HepG2 (cell line): ENCODE measurements at regions of chr20 and their contacts with region 1.

Region 1: GRCh38 chr20:45890985-45891983 is at the starts of genes CTSA and NEURL2:
- DNase-seq: peak; percentile 98
- ATAC-seq: peak; percentile 80
- H3K4me3 ChIP-seq: peak within 1 kb of the TSS; percentile 86 to 98 (median 96)
- H3K27ac ChIP-seq: peak within 1 kb of the TSS; percentile 87
- H3K4me1 ChIP-seq: peaks cover 43% of the 10 kb centered on the region
- H3K27me3 ChIP-seq: no peaks in the 10 kb centered on the region
- CTCF ChIP-seq: peak; percentile 79
- EP300 ChIP-seq: peak; percentile 87 to 97
- POLR2A ChIP-seq: peak; percentile 90 to 94
- RAD21 ChIP-seq: peak; percentile 66
- total RNA-seq, gene CTSA: 63.8 and 202 TPM in 2 replicates
- total RNA-seq, gene NEURL2: 4.1 and 9.7 TPM in 2 replicates

Region 2: DNA sequence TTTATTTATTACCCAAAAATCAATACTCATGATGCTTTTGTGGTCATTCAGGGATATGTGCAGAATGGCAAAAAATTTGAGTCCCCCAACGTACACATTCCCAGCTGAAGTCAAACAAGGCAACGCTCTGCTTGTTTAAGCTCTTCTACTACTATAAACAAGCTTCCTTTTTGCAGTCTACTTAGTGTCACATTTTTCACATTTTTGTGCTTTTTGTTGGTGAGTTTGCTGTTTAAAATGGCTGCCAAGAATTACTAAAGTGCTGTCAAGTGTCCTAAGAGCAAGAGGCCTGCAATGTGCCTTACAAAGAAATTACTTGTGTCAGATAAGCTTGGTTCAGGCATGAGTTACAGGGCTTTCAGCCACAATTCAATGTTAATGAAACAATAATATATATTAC is 314.3 kb before region 1 on chr20:
- CTCF ChIA-PET with region 1: no interaction called
- POLR2A ChIA-PET with region 1: no interaction called
- in situ Hi-C with region 1: no loop called
- intact Hi-C with region 1: no loop called
- DNase-seq: peak; percentile 37
- ATAC-seq: no peak; the same call in 2 of the 3 replicates
- H3K4me3 ChIP-seq: no peak overlapping the region
- H3K27ac ChIP-seq: no peak overlapping the region
- H3K4me1 ChIP-seq: peaks cover 5% of the 10 kb centered on the region; the same call in 1 of the 2 replicates
- H3K27me3 ChIP-seq: peaks cover 0 to 5% of the 10 kb centered on the region in 2 experiments; a peak in 1 of 5 replicates
- CTCF ChIP-seq: no peak
- EP300 ChIP-seq: no peak
- POLR2A ChIP-seq: no peak
- RAD21 ChIP-seq: no peak

Region 3: DNA sequence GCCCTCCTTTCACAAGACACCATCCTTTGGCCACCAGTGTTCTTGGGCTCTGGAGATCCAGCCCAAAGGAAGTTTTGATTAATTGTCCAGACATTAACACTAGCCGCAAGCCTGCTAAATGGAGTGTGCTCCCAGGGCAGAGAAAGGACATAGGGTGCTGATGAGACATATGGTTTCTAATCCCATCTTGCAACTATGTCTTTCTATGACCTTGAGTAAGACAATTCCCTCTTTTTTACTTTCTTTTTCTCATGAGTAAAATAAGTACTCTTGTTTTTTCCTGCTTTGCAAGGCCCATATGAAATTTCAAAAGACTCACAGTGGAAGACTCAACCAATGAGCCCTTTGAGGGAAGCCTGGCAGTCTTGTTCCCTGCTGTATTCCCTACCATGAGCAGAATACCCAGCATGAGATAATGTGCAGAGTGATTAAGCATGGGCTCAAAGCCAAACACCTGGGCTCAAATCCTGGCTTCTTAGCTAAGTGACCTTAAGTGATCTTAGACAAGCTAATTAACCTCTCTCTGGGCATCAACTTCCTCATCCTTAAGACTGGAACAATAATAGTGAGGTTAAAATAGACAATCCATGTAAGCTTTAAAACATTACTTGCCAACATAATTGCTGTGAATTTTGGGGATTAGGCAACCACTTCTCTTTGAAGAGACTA is 186.2 kb before region 1 on chr20 and contains the start of gene WFDC10B:
- CTCF ChIA-PET with region 1: no interaction called
- POLR2A ChIA-PET with region 1: no interaction called
- in situ Hi-C with region 1: no loop called
- intact Hi-C with region 1: no loop called
- DNase-seq: no peak
- ATAC-seq: no peak
- H3K4me3 ChIP-seq: no peak within 1 kb of the TSS
- H3K27ac ChIP-seq: no peak within 1 kb of the TSS
- H3K4me1 ChIP-seq: no peaks in the 10 kb centered on the region
- H3K27me3 ChIP-seq: peaks cover 0 to 12% of the 10 kb centered on the region in 2 experiments; a peak in 2 of 5 replicates
- CTCF ChIP-seq: no peak
- EP300 ChIP-seq: no peak
- POLR2A ChIP-seq: no peak
- RAD21 ChIP-seq: no peak
- total RNA-seq, gene WFDC10B: not detected in 2 replicates

Region 4: DNA sequence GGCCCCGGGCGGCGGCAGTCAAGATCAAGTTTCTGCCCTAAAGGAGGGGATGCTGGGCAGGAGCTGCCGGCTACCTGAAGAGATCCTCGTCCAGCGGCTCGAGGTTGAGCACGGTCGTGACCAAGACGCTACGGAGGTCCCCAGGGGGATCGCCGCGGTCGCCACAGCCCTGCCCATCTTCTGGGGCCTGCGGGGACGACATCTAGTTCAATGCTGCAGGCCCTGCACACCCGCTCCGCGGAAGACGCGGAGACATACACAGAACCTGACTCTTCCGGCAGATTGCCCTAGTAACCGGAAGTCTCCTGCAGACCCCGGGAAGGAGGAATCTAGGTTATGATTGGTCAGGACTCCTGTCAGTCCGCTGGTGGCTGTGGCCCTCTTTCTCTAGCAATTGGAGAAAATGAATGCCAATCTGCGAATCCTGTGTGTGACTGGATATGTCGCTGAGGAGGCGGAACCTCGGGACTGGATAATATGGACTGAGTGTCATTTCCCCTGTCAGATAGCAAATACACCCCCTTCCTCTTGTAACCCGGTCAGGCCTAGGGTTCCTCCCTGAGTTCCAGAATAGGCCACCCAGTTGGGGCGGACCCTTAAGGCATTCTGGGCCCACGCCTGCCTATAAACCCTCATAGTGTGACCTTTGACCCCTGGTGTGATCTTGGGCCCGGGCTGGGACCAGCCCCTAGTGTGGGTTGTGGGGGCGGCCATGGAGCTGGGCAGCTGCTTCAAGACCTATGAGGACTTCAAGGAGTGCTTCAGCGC is 34.0 kb before region 1 on chr20 and contains the starts of genes ACOT8 and ZSWIM3:
- CTCF ChIA-PET with region 1: no interaction called
- POLR2A ChIA-PET with region 1: interaction called, 40 read pairs
- in situ Hi-C with region 1: no loop called
- intact Hi-C with region 1: loop called (anchors 2 kb)
- DNase-seq: peak; percentile 100
- ATAC-seq: peak; percentile 98
- H3K4me3 ChIP-seq: peak within 1 kb of the TSS; percentile 78 to 91 (median 83)
- H3K27ac ChIP-seq: peak within 1 kb of the TSS; percentile 49
- H3K4me1 ChIP-seq: peaks cover 55% of the 10 kb centered on the region
- H3K27me3 ChIP-seq: no peaks in the 10 kb centered on the region; a peak in 1 of 5 replicates
- CTCF ChIP-seq: 0 out of 2 replicates have a peak, but pooled peaks have one; percentile 19
- EP300 ChIP-seq: peak in 1 of 2 experiments; percentile 41; a peak in 1 of 4 replicates
- POLR2A ChIP-seq: peak; percentile 84 to 97
- RAD21 ChIP-seq: peak; percentile 62
- total RNA-seq, gene ACOT8: 31.4 and 39.1 TPM in 2 replicates
- total RNA-seq, gene ZSWIM3: 5.8 and 7.3 TPM in 2 replicates

Region 5: GRCh38 chr20:45910670-45911485 is 19.6 kb after region 1 on chr20:
- CTCF ChIA-PET with region 1: no interaction called
- POLR2A ChIA-PET with region 1: interaction called, 164 read pairs
- in situ Hi-C with region 1: no loop called
- intact Hi-C with region 1: no loop called
- DNase-seq: no peak
- ATAC-seq: no peak
- H3K4me3 ChIP-seq: peak overlapping the region in 1 of 3 experiments; percentile 66; a peak in 1 of 6 replicates
- H3K27ac ChIP-seq: no peak overlapping the region
- H3K4me1 ChIP-seq: peaks cover 56% of the 10 kb centered on the region
- H3K27me3 ChIP-seq: peaks cover 0 to under 1% of the 10 kb centered on the region in 2 experiments; a peak in 2 of 5 replicates
- CTCF ChIP-seq: no peak
- EP300 ChIP-seq: no peak
- POLR2A ChIP-seq: no peak
- RAD21 ChIP-seq: no peak

Region 6: DNA sequence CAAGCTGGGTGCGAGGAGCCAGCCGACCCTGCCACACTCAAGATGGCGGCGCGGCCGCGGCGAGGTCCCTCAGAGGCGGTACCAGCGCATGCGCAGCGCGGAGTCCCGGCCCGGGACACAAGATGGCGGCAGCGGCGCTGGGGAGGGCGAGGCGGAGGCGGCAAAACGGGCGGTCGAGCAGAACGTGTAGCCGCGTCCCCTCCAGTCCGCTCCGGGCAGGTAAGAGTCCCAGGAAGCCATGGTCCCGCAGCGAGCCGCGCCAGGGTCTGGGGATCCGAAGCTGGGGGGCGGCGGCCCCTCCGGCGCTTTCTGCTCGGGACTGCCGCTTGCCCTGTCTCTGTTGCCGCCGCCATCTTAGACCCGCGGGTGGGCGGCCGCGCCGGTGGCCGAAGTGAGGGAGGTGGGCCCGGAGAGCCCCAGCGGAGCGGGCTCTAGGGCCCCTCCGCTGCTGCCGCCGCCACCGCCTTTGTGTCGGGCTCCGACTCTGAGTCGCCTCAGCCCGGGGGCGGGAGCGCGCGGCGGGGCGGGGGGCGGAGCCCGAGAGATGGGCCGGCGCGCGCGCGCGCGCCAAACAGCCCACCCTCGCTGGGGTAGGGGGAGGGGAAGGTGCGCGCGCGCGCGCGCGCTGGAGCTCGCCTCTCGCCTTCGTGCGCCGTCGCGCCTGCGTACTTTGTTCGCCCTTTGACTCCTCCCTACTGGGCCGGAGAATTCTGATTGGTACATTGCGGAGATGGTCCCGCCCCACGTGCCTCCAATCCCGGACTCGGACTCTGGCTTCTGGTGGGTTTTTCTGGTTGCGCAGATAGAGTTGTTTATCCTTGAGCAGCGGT is 43.5 kb after region 1 on chr20 and contains the start of gene PCIF1:
- CTCF ChIA-PET with region 1: interaction called, 3 read pairs
- POLR2A ChIA-PET with region 1: interaction called, 133 read pairs
- in situ Hi-C with region 1: loop called (anchors 5 kb)
- intact Hi-C with region 1: loop called (anchors 2 kb)
- DNase-seq: peak; percentile 98
- ATAC-seq: peak; percentile 72
- H3K4me3 ChIP-seq: peak within 1 kb of the TSS; percentile 92 to 97 (median 95)
- H3K27ac ChIP-seq: peak within 1 kb of the TSS; percentile 97
- H3K4me1 ChIP-seq: peaks cover 54% of the 10 kb centered on the region
- H3K27me3 ChIP-seq: no peaks in the 10 kb centered on the region; a peak in 1 of 5 replicates
- CTCF ChIP-seq: no peak
- EP300 ChIP-seq: peak in 1 of 2 experiments; percentile 23; a peak in 3 of 4 replicates
- POLR2A ChIP-seq: peak; percentile 64 to 98
- RAD21 ChIP-seq: peak; percentile 90
- total RNA-seq, gene PCIF1: 18.5 and 20.9 TPM in 2 replicates

Region 7: DNA sequence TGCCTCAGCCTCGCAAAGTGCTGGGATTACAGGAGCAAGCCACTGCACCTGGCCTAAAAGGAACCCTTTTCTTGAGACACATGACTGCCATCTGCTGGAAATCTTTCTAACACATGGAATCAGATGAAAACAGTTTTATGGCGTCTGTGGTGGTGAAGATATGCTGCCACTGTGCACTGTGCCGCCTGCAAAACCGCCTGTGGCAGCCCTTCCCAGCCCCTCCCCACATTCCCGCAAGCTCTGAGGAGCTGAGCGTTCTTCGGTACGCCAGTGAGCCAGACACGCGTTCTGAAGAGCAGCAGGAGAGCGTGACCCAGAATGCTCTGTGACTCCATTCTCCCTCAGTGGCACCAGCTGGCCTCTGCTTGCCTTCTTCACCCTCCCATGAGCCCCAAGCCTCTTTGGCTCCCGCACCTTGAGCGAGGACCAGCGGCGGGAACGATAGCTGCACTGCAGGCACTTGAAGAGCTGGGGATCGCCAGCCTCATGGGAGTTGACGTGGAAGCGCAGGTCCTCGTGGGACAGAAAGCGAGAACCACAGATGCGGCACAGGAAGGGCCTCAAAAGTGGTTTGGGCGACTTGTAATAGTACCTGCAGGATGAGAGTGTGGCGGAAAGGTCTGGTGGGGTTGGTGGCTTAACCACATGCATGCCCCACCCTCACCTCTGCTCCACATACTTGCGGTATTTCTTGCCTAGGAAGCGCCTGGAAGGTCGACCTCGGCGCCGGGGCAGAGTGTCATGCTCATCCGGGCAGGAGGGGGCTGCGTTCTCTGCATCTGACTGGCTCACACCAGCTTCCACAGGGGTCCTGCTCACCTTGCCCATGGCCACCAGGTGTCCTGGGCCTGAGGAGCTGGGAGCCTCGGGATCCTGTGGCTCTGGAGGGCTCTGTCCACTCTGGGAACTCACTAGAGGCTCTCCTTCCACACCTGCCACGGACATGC is 72.0 kb after region 1 on chr20:
- CTCF ChIA-PET with region 1: interaction called, 19 read pairs
- POLR2A ChIA-PET with region 1: interaction called, 27 read pairs
- in situ Hi-C with region 1: loop called (anchors 5 kb)
- intact Hi-C with region 1: loop called (anchors 1 kb)
- DNase-seq: peak; percentile 82
- ATAC-seq: peak; percentile 74
- H3K4me3 ChIP-seq: no peak overlapping the region
- H3K27ac ChIP-seq: no peak overlapping the region
- H3K4me1 ChIP-seq: no peaks in the 10 kb centered on the region
- H3K27me3 ChIP-seq: no peaks in the 10 kb centered on the region
- CTCF ChIP-seq: peak; percentile 93
- EP300 ChIP-seq: no peak
- POLR2A ChIP-seq: no peak
- RAD21 ChIP-seq: peak; percentile 89

Region 8: GRCh38 chr20:45987108-45987780 is 96.0 kb after region 1 on chr20:
- CTCF ChIA-PET with region 1: no interaction called
- POLR2A ChIA-PET with region 1: no interaction called
- in situ Hi-C with region 1: no loop called
- intact Hi-C with region 1: no loop called
- DNase-seq: peak; percentile 73
- ATAC-seq: peak; percentile 96
- H3K4me3 ChIP-seq: no peak overlapping the region
- H3K27ac ChIP-seq: no peak overlapping the region
- H3K4me1 ChIP-seq: no peaks in the 10 kb centered on the region
- H3K27me3 ChIP-seq: peaks cover 0 to 13% of the 10 kb centered on the region in 2 experiments; a peak in 2 of 5 replicates
- CTCF ChIP-seq: peak; percentile 94
- EP300 ChIP-seq: no peak
- POLR2A ChIP-seq: no peak
- RAD21 ChIP-seq: peak; percentile 80

Region 9: DNA sequence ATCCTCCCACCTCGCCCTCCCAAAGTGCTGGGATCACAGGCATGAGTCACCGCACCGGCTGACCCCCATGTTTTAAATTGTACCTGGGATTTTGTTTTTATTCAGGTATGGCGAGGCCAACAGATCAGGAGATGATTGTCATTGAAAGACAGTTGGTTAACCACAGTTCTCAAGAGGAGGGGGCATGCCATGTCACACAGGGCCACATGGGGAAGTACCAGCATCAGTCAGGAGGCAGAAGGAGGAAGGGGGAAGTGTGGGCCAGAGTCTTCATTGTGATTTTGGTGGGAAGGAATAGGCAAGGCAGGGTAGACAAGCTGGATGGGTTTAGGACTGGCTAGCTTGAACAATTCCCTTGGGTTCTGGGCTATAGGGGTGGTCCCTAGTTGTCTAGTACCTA is 107.5 kb after region 1 on chr20:
- CTCF ChIA-PET with region 1: no interaction called
- POLR2A ChIA-PET with region 1: no interaction called
- in situ Hi-C with region 1: no loop called
- intact Hi-C with region 1: no loop called
- DNase-seq: no peak
- ATAC-seq: no peak
- H3K4me3 ChIP-seq: no peak overlapping the region
- H3K27ac ChIP-seq: no peak overlapping the region
- H3K4me1 ChIP-seq: peaks cover 2% of the 10 kb centered on the region
- H3K27me3 ChIP-seq: peaks cover 11 to 63% of the 10 kb centered on the region in 2 experiments
- CTCF ChIP-seq: no peak
- EP300 ChIP-seq: no peak
- POLR2A ChIP-seq: no peak
- RAD21 ChIP-seq: no peak